Heart right ventricle (tissue), 16 donors: ENCODE measurements at regions of chr15 and their contacts with region 1.

Region 1: GRCh38 chr15:22980189-22981050 is at the start of gene CYFIP1:
- DNase-seq: peak; percentile 90
- ATAC-seq: peak; percentile 95 to 98 (median 97)
- H3K4me3 ChIP-seq: peak within 1 kb of the TSS; percentile 48 to 95 (median 92)
- H3K27ac ChIP-seq: peak within 1 kb of the TSS; percentile 83 to 95 (median 88)
- H3K4me1 ChIP-seq: peaks cover 3 to 31% (median 15%) of the 10 kb centered on the region in 9 donors
- H3K27me3 ChIP-seq: peaks cover 0 to 15% (median 0%) of the 10 kb centered on the region in 7 donors
- CTCF ChIP-seq: no peak
- total RNA-seq, gene CYFIP1: 17.6 to 56.6 (median 28.7) TPM

Region 2: GRCh38 chr15:22850055-22850454 is 130.4 kb before region 1 on chr15:
- intact Hi-C with region 1: no loop called
- DNase-seq: no peak
- ATAC-seq: peak in 1 of 8 donors; percentile 44
- H3K4me3 ChIP-seq: no peak overlapping the region
- H3K27ac ChIP-seq: no peak overlapping the region
- H3K4me1 ChIP-seq: peaks cover 0 to 2% (median 0%) of the 10 kb centered on the region in 9 donors
- H3K27me3 ChIP-seq: no peaks in the 10 kb centered on the region
- CTCF ChIP-seq: no peak

Region 3: DNA sequence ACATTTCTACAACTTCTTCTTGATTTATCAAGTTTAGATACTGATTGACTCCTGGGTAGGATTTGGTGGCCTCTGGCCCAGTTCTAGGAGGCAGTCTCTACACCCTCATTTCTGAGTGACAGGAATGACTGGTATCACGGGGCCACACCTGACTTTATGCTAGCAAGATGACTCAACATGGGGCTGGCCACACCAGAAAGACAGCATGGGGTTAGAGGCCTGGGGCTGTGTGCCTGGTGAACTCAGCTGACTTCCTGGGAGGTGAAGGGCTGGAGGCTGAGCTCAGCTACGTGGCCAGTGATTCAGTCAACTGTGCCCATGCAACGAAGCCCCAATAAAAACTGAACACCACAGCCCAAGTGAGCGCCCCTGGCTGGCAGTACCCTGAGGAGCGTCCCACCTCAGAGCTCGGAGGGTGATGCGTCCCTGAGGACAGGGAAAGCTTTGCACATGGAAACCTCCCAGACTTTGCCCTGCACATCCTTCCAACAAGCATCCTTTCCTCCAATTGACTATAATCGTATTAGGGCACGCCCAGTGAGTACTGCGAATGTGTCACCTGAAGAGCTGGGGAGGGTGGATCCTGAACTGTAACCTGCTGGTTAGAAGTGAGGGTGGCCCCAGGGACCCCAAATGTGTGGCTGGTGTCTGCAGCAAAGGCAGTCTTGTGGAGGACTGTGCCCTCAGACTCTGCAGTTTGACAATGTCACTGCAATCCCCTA is 84.8 kb before region 1 on chr15:
- intact Hi-C with region 1: no loop called
- DNase-seq: no peak
- ATAC-seq: no peak
- H3K4me3 ChIP-seq: no peak overlapping the region
- H3K27ac ChIP-seq: no peak overlapping the region
- H3K4me1 ChIP-seq: no peaks in the 10 kb centered on the region
- H3K27me3 ChIP-seq: no peaks in the 10 kb centered on the region
- CTCF ChIP-seq: no peak

Region 4: GRCh38 chr15:22918056-22918455 is 62.4 kb before region 1 on chr15:
- intact Hi-C with region 1: loop called in 1 of 10 experiments (anchors 10 kb)
- DNase-seq: no peak
- ATAC-seq: no peak
- H3K4me3 ChIP-seq: no peak overlapping the region
- H3K27ac ChIP-seq: no peak overlapping the region
- H3K4me1 ChIP-seq: no peaks in the 10 kb centered on the region
- H3K27me3 ChIP-seq: no peaks in the 10 kb centered on the region
- CTCF ChIP-seq: no peak

Region 5: DNA sequence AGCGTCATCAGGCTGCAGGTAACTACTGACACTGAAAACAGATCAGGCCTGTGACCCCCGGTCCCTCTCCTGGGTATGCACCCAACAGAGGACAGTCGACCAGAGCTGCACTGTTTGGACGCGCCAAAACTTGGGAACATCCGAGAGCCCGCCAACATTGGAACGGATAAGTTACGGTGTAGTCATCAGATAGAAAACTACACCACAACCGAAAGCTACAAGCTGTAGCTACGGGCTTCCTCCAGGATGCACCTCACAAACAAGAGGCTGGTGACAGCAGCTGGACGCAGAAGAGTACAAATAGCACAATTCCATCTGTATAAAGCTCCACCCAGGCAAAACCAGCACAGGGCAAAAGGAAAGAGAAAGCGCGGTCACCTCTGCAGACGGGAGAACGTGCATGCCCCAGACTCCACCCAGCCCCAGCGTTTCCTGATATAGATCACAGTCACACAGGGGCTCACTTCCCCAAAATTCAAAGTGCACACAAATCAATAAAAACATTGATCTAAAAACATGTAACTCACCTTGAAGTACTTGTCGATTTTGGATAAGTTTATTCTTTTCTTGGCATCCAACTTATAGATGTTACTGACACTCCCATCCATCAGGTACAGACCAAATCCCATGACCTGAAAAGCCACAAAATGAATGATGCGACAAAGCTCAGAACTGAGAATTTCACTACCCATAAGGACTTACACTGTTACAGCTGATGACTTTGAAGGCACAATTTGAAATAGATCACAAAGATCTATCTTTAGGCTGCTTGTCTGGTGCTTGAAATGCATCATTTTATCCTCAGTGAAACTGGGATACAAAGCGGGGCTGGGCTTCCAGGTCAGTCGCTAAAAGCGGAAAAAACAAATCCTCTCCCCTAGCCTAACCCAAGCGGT is 43.6 kb before region 1 on chr15:
- intact Hi-C with region 1: loop called in 1 of 10 experiments (anchors 10 kb)
- DNase-seq: no peak
- ATAC-seq: no peak
- H3K4me3 ChIP-seq: no peak overlapping the region
- H3K27ac ChIP-seq: no peak overlapping the region
- H3K4me1 ChIP-seq: no peaks in the 10 kb centered on the region
- H3K27me3 ChIP-seq: no peaks in the 10 kb centered on the region
- CTCF ChIP-seq: no peak

Region 6: GRCh38 chr15:22956257-22956977 is 24.0 kb before region 1 on chr15:
- intact Hi-C with region 1: loop called in 1 of 10 experiments (anchors 2 kb)
- DNase-seq: peak; percentile 61 to 68
- ATAC-seq: peak; percentile 14 to 58 (median 30)
- H3K4me3 ChIP-seq: peak overlapping the region in 1 of 10 donors; percentile 1
- H3K27ac ChIP-seq: peak overlapping the region in 8 of 10 donors; percentile 24 to 71 (median 48)
- H3K4me1 ChIP-seq: peaks cover 35 to 100% (median 82%) of the 10 kb centered on the region in 9 donors
- H3K27me3 ChIP-seq: no peaks in the 10 kb centered on the region
- CTCF ChIP-seq: no peak

Region 7: DNA sequence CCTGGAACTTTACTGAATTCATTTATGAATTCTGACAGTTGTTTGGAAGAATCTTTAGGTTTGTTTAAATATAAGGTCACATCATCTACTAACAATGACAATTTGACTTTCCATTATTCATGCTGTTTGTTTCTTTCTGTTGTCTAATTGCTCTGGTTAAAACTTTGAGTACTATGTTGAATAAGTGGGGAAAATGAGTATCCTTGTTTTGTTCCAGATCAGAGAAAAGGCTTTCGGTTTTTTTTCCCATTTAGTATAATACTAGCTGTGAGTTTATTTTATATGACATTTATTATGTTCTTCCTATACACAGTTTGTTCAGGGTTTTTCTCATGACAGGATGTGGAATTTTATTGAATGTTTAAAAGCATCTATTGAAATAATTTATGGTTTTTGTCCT is 70.3 kb after region 1 on chr15:
- intact Hi-C with region 1: no loop called
- DNase-seq: no peak
- ATAC-seq: no peak
- H3K4me3 ChIP-seq: no peak overlapping the region
- H3K27ac ChIP-seq: no peak overlapping the region
- H3K4me1 ChIP-seq: no peaks in the 10 kb centered on the region
- H3K27me3 ChIP-seq: peaks cover 0 to 3% (median 0%) of the 10 kb centered on the region in 7 donors
- CTCF ChIP-seq: no peak